Testis (tissue), 5 donors: ENCODE measurements at regions of chr13 and their contacts with region 1.

Region 1: GRCh38 chr13:43804461-43805070 is 17.8 kb upstream of the ENOX1 start:
- DNase-seq: no peak
- H3K4me3 ChIP-seq: no peak overlapping the region
- H3K27ac ChIP-seq: no peak overlapping the region
- H3K4me1 ChIP-seq: no peaks in the 10 kb centered on the region
- H3K27me3 ChIP-seq: no peaks in the 10 kb centered on the region
- CTCF ChIP-seq: peak in 2 of 3 experiments; percentile 45 to 59
- POLR2A ChIP-seq: no peak

Region 2: GRCh38 chr13:43085545-43085944 is 719.0 kb before region 1 on chr13:
- intact Hi-C with region 1: loop called (anchors 10 kb)
- DNase-seq: no peak
- H3K4me3 ChIP-seq: no peak overlapping the region
- H3K27ac ChIP-seq: no peak overlapping the region
- H3K4me1 ChIP-seq: peaks cover 14% of the 10 kb centered on the region
- H3K27me3 ChIP-seq: no peaks in the 10 kb centered on the region
- CTCF ChIP-seq: peak; percentile 42 to 75 (median 48)
- POLR2A ChIP-seq: no peak

Region 3: DNA sequence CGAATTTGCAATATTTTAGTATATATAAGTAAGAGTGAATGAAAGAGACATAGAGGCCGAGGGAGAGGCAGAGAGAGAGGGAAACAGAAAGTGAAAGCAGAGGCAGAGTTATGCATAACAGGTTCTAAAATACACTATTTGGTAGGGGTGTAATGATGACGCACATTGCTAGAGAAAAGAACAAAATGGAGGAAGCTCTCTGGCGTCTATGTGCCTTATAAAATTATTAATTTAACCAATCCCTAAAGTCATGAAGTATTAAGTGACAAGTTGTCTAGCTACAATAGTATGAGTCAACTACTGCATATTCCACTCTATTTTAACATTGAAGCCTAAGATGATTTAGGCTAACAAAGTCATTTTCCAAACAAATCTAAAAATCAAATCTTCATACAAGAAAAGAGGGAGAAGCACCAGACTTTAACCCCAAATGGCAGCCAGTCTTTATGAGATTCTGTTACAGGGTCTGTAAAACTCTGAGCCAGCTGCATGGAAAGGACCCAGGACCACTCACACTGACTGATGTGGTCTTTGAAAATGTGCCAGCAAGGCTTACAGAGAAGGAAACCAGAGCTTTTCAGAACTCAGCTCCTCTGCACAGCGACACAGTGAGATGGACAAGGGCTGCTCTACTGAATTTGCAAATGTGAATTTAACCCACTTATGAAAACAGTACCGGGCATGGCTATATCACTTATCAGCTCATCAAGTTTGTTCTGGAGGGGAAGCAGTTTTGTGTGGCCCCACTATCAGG is 470.1 kb after region 1 on chr13:
- intact Hi-C with region 1: no loop called
- DNase-seq: no peak
- H3K4me3 ChIP-seq: no peak overlapping the region
- H3K27ac ChIP-seq: peak overlapping the region in 1 of 2 donors; percentile 57
- H3K4me1 ChIP-seq: peaks cover 4% of the 10 kb centered on the region
- H3K27me3 ChIP-seq: no peaks in the 10 kb centered on the region
- CTCF ChIP-seq: no peak
- POLR2A ChIP-seq: no peak